Activated CD8-positive, alpha-beta memory T cell treated with anti-CD3 and anti-CD28 coated beads, Interleukin-2, amount 10 ng/mL, durations not matched to agents 7 days and 5 days (primary cell): ENCODE measurements at regions of chr17 and their contacts with region 1.

Region 1: GRCh38 chr17:83083323-83084201 is 4.2 kb downstream of the METRNL start:
- DNase-seq: peak; percentile 88
- ATAC-seq: peak; percentile 52
- H3K4me3 Mint-ChIP-seq: peak overlapping the region; percentile 75
- H3K27ac Mint-ChIP-seq: peak overlapping the region; percentile 92
- H3K4me1 Mint-ChIP-seq: peaks cover 57% of the 10 kb centered on the region
- H3K27me3 Mint-ChIP-seq: peaks cover 3% of the 10 kb centered on the region

Region 2: GRCh38 chr17:82836823-82837357 is 246.7 kb before region 1 on chr17:
- CTCF ChIA-PET with region 1: no interaction called
- DNase-seq: no peak
- ATAC-seq: no peak
- H3K4me3 Mint-ChIP-seq: no peak overlapping the region
- H3K27ac Mint-ChIP-seq: no peak overlapping the region
- H3K4me1 Mint-ChIP-seq: peaks cover 3% of the 10 kb centered on the region
- H3K27me3 Mint-ChIP-seq: no peaks in the 10 kb centered on the region

Region 3: DNA sequence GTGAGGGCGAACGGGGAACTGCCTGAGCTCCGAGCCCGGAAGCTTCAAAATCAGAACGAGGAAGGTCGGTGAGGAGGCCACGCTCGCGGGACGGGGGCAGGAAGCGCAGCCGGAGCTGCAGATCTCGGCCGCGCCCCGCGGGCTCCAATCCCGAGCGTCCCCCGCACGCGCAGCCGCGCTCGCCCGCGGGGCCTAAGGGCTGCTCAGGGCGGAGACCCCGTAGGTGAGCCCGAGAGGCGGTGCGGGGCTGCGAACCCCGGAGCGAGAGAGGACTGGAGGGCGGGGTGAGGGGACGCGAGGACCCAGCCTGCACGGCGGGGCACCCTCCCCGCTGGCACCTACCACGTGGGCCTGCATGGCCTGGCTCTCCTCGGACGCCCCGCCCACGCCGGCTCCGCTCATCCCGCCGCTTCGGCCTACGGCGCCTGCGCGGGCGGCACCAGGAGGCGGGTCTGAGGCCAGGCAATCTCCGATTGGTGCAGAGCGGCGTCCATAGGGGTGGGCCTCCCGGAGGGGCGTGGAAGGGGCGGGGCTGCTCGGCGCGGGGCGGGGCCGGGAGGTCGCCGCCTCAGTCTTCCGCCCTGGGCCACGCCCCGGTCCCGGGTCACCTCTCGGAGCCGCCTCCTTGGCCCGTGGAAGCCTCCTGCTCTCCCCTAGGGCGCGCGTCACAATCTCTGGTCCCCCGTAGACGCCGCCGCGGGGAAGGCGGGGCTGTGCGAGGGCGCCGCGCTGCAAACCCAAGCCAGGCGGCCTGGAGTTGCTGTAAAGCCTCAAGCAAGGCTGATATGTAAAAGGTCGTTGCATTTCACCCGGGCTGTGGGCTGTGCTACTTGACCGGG is 31.9 kb before region 1 on chr17:
- CTCF ChIA-PET with region 1: interaction called, 12 read pairs
- DNase-seq: peak; percentile 98
- ATAC-seq: peak; percentile 91
- H3K4me3 Mint-ChIP-seq: peak overlapping the region; percentile 80
- H3K27ac Mint-ChIP-seq: peak overlapping the region; percentile 91
- H3K4me1 Mint-ChIP-seq: peaks cover 56% of the 10 kb centered on the region
- H3K27me3 Mint-ChIP-seq: no peaks in the 10 kb centered on the region

Region 4: GRCh38 chr17:83067221-83068048 is 16.1 kb before region 1 on chr17:
- CTCF ChIA-PET with region 1: no interaction called
- DNase-seq: no peak
- ATAC-seq: no peak
- H3K4me3 Mint-ChIP-seq: no peak overlapping the region
- H3K27ac Mint-ChIP-seq: no peak overlapping the region
- H3K4me1 Mint-ChIP-seq: peaks cover 31% of the 10 kb centered on the region
- H3K27me3 Mint-ChIP-seq: peaks cover 15% of the 10 kb centered on the region

Region 5: GRCh38 chr17:83200202-83200699 is 116.7 kb after region 1 on chr17:
- CTCF ChIA-PET with region 1: interaction called, 28 read pairs
- DNase-seq: peak; percentile 93
- ATAC-seq: peak; percentile 78
- H3K4me3 Mint-ChIP-seq: peak overlapping the region; percentile 74
- H3K27ac Mint-ChIP-seq: peak overlapping the region; percentile 100
- H3K4me1 Mint-ChIP-seq: peaks cover 69% of the 10 kb centered on the region
- H3K27me3 Mint-ChIP-seq: no peaks in the 10 kb centered on the region